Endothelial cell of umbilical vein (primary cell): ENCODE measurements at regions of chr21 and their contacts with region 1.

Region 1: DNA sequence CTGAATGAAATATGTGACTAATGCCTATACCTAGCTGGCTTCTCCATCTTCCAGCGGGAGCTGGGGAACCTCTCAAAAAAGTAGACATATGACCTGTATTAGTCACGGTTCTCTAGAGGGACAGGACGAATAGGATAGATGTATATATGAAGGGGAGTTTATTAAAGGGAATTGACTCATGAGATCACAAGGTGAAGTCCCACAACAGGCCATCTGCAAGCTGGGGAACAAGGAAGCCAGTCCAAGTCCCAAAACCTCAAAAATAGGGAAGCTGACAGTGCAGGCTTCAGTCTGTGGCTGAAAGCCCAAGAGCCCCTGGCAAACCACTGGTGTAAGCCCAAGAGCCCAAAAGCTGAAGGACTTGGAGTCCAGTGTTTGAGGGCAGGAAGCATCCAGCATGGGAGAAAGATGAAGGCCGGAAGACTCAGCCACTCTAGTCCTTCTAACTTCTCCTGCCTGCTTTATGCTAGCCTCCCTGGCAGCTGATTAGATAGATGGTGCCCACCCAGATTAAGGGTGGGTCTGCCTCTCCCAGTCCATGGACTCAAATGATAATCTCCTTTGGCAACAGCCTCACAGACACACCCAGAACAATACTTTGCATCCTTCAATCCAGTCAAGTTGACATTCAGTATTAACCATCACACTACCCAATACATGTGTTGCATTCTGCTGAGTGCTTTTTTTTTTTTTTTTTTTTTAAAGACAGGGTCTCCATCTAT is 19.6 kb downstream of the OLIG1 start:
- DNase-seq: no peak
- H3K4me3 ChIP-seq: no peak overlapping the region
- H3K27ac ChIP-seq: no peak overlapping the region
- H3K4me1 ChIP-seq: no peaks in the 10 kb centered on the region
- H3K27me3 ChIP-seq: peaks cover 6 to 10% of the 10 kb centered on the region in 2 experiments
- CTCF ChIP-seq: no peak
- POLR2A ChIP-seq: no peak

Region 2: DNA sequence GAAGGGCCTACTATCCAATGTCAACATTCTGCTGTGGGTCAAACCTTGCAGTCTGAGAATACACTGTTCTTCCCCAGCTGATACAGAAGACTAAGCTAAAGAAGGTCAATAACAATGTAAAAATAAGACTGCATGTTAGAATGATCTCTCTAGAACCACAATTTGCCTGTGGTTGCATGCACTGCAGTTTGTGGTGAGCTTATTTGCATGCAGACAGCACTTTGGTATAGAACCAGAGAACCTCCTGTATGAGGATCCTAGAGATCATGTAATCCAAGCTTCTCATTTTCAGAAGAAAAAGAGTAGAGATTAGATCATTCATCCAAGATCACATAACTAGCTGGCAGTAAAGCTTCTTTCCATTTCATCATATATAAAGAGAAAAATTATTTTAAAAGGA is 377.5 kb before region 1 on chr21:
- CTCF ChIA-PET with region 1: no interaction called
- POLR2A ChIA-PET with region 1: interaction called, 14 read pairs
- dilution Hi-C with region 1: no loop called
- intact Hi-C with region 1: no loop called
- DNase-seq: no peak
- H3K4me3 ChIP-seq: no peak overlapping the region
- H3K27ac ChIP-seq: no peak overlapping the region
- H3K4me1 ChIP-seq: peaks cover 31% of the 10 kb centered on the region
- H3K27me3 ChIP-seq: no peaks in the 10 kb centered on the region
- CTCF ChIP-seq: no peak
- POLR2A ChIP-seq: no peak

Region 3: DNA sequence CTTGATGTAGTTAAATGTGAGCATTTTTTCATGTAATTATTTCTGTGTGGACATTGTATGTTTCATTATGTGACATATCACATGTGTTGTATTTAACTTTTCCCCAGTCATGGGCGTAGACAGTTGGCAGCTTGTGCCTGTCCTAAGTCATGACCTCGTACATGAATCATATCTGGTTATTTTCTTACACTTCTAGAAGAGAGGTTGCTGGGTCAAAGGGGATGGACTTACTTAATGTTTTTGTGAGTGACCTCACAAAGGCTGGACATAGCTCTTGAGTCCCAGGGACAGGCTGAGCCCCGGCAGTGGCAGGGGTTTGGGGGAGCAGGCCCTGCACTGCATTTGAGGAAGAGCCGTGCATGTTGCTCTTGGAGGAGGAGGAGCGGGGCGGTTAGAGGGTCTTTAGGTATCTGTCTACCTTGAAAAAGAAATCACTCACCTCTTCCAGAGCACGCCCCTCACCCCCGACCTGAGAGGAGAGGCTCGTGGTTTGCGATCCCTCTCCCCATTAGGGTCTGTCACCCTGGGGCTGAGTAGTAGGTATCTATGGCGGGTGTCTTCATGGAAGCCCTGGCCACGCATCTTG is 330.1 kb after region 1 on chr21:
- CTCF ChIA-PET with region 1: no interaction called
- POLR2A ChIA-PET with region 1: no interaction called
- dilution Hi-C with region 1: no loop called
- intact Hi-C with region 1: no loop called
- DNase-seq: peak; percentile 82
- H3K4me3 ChIP-seq: no peak overlapping the region
- H3K27ac ChIP-seq: peak overlapping the region; percentile 44
- H3K4me1 ChIP-seq: peaks cover 11% of the 10 kb centered on the region
- H3K27me3 ChIP-seq: no peaks in the 10 kb centered on the region
- CTCF ChIP-seq: no peak
- POLR2A ChIP-seq: no peak